ENCODE measurements at regions of chr2 and their contacts with region 1.

Region 1: DNA sequence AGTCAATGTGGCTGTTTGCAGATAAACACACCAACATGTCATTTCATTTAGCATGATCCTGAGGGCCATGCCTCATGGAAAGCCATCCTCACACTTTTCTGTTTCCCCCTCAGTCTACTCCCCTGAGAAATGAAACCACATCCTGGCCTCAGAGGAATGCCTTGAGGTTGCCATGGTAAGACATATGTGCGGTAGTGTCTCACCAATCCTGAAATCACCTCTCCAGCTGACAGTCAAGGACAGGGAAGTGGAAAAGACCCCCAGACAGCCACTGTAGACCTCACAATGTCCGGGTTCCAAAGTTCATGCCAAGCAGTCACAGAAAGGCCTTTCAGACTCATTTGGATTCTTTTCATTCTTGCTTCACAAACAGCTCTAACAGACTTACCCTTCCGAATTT is 175.2 kb upstream of the PKDCC start:
- DNase-seq: no peak
- H3K4me3 ChIP-seq: no peak overlapping the region
- H3K27ac ChIP-seq: no peak overlapping the region
- H3K4me1 ChIP-seq: no peaks in the 10 kb centered on the region
- H3K27me3 ChIP-seq: no peaks in the 10 kb centered on the region
- CTCF ChIP-seq: no peak
- POLR2A ChIP-seq: no peak

Region 2: DNA sequence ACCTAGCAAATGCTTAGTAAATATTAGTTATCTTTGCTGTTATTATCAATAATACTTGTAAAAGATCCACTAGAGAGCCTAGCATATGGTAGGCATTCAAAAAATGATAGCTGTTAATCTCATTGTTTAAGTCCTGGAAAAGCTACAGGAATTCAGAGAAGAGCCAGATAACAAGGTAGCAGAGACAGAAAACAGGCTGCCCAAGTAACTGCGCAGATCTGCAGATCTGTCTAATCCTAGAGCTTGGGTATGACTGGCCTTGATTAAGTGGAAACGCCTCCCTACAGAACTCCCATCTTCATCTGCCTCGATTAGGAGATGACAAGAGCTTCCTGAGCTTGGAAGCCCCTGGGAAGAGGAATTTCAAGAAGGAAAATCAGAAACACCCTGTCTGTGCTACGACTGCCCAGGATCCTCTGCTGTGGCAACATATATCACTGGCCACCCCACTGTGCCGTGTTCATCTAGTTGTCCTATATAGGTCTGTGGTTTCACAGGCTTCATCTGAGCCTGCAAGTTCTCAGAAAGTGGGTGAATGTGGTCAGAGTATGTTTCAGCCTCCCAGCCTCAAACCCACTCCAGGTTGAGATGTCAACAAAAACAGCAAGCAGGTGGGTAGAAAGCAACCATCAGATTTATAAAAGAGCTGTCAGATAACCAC is 23.7 kb after region 1 on chr2:
- intact Hi-C with region 1: no loop called
- DNase-seq: no peak
- H3K4me3 ChIP-seq: no peak overlapping the region
- H3K27ac ChIP-seq: no peak overlapping the region
- H3K4me1 ChIP-seq: no peaks in the 10 kb centered on the region
- H3K27me3 ChIP-seq: no peaks in the 10 kb centered on the region
- CTCF ChIP-seq: no peak
- POLR2A ChIP-seq: no peak

Region 3: DNA sequence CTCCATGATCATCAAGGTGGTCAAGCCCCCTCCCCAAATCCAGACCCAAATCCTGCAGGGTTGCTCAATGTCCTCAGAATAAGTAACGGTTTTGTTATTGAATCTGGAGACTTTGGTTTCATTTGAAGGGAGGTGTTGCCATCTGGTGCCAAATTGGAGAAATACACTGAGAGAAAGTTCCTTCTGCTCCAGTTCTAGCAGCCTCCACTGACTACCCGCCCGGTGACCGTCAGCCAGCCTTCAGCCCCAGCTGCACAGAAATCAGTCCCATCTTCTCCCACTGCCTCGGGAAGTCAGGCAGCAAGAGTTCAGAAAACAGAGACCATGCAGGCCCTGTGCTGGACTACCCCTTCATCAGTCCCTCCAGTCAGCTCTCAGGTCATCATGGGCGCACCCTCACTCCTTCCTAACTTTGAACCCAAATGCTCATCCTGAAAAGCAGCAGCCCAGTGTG is 213.9 kb after region 1 on chr2:
- intact Hi-C with region 1: loop called (anchors 1 kb)
- DNase-seq: no peak
- H3K4me3 ChIP-seq: no peak overlapping the region
- H3K27ac ChIP-seq: no peak overlapping the region
- H3K4me1 ChIP-seq: no peaks in the 10 kb centered on the region
- H3K27me3 ChIP-seq: no peaks in the 10 kb centered on the region
- CTCF ChIP-seq: peak; percentile 14 to 91 (median 83)
- POLR2A ChIP-seq: no peak